ENCODE measurements at regions of chr7 and their contacts with region 1.

Region 1: DNA sequence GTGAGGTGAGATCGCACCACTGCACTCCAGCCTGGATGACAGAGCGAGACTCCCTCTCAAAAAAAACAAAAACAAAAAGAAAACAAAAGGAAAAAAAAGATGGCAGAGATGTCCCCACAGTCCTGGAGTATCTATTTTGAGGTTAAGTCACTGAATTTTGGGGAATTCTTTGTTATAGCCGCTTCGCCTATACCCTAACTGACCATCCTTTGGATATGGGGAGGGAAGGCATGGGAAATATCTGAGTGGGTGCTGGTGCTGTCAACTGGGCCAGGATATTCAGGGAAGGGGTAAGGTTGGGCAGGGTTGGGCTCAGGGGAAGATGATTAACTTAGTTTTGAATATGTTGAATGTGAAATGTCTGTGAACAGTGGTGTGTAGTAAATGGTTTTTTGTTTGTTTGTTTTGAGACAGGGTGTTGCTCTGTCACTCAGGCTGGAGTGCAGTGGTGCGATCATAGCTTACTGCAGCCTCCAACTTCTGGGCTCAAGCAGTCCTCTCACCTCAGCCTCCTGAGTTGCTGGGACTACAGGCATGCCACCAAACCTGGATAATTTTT is 8.3 kb upstream of the GNB2 start:
- DNase-seq: peak in 1 of 5 donors; percentile 1
- ATAC-seq: no peak
- H3K4me3 ChIP-seq: no peak overlapping the region
- H3K27ac ChIP-seq: no peak overlapping the region
- H3K4me1 ChIP-seq: no peaks in the 10 kb centered on the region
- H3K27me3 ChIP-seq: peaks cover 0 to 4% (median 0%) of the 10 kb centered on the region in 9 donors
- CTCF ChIP-seq: no peak
- POLR2A ChIP-seq: no peak

Region 2: GRCh38 chr7:100626530-100627237 is 38.6 kb before region 1 on chr7:
- intact Hi-C with region 1: loop called in 2 of 10 experiments (anchors 5 kb)
- DNase-seq: peak; percentile 78 to 91 (median 84)
- ATAC-seq: peak; percentile 89 to 99 (median 96)
- H3K4me3 ChIP-seq: peak overlapping the region in 9 of 12 donors; percentile 26 to 51 (median 43)
- H3K27ac ChIP-seq: peak overlapping the region in 1 of 12 donors; percentile 67
- H3K4me1 ChIP-seq: peaks cover 0 to 12% (median 4%) of the 10 kb centered on the region in 12 donors
- H3K27me3 ChIP-seq: no peaks in the 10 kb centered on the region
- CTCF ChIP-seq: no peak
- POLR2A ChIP-seq: no peak

Region 3: DNA sequence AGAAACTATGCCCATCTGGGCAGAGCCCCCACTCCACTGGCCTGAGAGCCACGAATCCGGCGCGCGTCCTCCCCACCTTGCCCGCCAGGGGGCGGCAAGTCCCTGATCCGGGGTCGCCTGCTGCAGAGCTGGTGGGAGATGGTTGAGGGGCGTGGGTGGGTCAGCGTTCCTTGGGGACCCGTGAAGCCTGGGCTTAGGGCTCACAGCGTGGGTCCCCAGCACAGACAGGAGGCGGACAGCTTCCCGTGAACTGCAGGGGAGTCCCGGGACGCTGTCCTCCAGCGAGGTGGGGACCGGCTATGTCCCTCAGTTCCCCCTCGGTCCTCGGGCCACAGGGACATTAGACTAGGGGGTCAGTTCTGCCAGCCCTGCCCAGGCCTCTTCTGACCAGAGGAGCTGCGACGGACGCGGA is 40.1 kb after region 1 on chr7:
- intact Hi-C with region 1: no loop called
- DNase-seq: peak; percentile 74 to 92 (median 81)
- ATAC-seq: peak; percentile 54 to 80 (median 74)
- H3K4me3 ChIP-seq: peak overlapping the region; percentile 53 to 88 (median 77)
- H3K27ac ChIP-seq: peak overlapping the region; percentile 91 to 99 (median 94)
- H3K4me1 ChIP-seq: peaks cover 0 to 28% (median 18%) of the 10 kb centered on the region in 12 donors
- H3K27me3 ChIP-seq: no peaks in the 10 kb centered on the region
- CTCF ChIP-seq: peak; percentile 82 to 97 (median 92)
- POLR2A ChIP-seq: no peak